Activated CD8-positive, alpha-beta memory T cell treated with anti-CD3 and anti-CD28 coated beads, Interleukin-2, amount 10 ng/mL, durations not matched to agents 7 days and 5 days (primary cell): ENCODE measurements at regions of chr20 and their contacts with region 1.

Region 1: GRCh38 chr20:49323622-49324238 is 45.9 kb upstream of the ZNFX1 start:
- DNase-seq: peak; percentile 67
- ATAC-seq: peak; percentile 90
- H3K4me3 Mint-ChIP-seq: no peak overlapping the region
- H3K27ac Mint-ChIP-seq: peak overlapping the region; percentile 80
- H3K4me1 Mint-ChIP-seq: peaks cover 23% of the 10 kb centered on the region
- H3K27me3 Mint-ChIP-seq: peaks cover 42% of the 10 kb centered on the region

Region 2: DNA sequence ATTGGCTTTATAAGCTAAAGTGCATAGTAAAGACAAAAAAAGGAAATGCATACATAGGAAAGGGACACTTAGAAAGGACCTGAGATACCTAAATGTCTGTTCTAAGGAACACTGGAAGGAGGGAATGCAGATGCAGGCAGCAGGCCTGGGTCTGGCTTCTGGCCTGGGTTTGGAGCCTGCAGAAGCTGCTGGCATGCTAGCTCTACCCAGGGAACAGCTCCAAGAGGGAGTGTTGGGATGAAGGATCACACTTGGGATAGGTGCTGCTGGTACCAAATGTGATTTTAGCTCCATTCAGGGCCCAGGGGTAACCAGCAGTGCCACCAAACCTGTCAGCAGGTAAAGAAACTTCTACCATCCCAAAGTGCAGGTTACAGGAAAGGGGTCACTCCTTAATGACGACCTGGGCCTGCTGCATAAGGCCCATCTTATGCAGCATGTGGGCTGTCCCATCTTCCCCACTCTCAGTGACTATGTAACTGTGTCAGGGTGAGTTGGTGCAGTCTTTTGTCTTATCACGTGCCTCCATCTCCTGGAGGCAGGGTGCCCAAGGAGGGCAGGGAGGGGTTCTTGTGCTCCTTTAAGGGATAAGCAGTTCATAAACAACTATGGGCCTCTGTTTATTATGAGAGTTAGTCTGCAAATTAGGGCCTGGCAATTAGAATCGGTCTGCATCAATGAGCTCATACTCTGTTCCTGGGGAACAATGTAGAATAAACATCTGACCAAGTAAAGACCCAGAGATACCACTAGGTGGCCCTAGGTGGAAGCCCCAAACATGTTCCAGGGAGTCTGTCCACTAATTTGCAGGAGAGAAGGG is 77.6 kb before region 1 on chr20:
- CTCF ChIA-PET with region 1: interaction called, 13 read pairs
- DNase-seq: no peak
- ATAC-seq: peak; percentile 63
- H3K4me3 Mint-ChIP-seq: no peak overlapping the region
- H3K27ac Mint-ChIP-seq: peak overlapping the region; percentile 40
- H3K4me1 Mint-ChIP-seq: peaks cover 2% of the 10 kb centered on the region
- H3K27me3 Mint-ChIP-seq: no peaks in the 10 kb centered on the region

Region 3: GRCh38 chr20:49343246-49343645 is 19.5 kb after region 1 on chr20:
- CTCF ChIA-PET with region 1: no interaction called
- DNase-seq: no peak
- ATAC-seq: no peak
- H3K4me3 Mint-ChIP-seq: no peak overlapping the region
- H3K27ac Mint-ChIP-seq: no peak overlapping the region
- H3K4me1 Mint-ChIP-seq: peaks cover 4% of the 10 kb centered on the region
- H3K27me3 Mint-ChIP-seq: peaks cover 25% of the 10 kb centered on the region

Region 4: GRCh38 chr20:49356676-49357075 is 32.9 kb after region 1 on chr20:
- CTCF ChIA-PET with region 1: no interaction called
- DNase-seq: no peak
- ATAC-seq: no peak
- H3K4me3 Mint-ChIP-seq: no peak overlapping the region
- H3K27ac Mint-ChIP-seq: no peak overlapping the region
- H3K4me1 Mint-ChIP-seq: no peaks in the 10 kb centered on the region
- H3K27me3 Mint-ChIP-seq: peaks cover 17% of the 10 kb centered on the region